ENCODE measurements at regions of chr6 and their contacts with region 1.

Region 1: GRCh38 chr6:138517635-138518034 is 18.3 kb upstream of the NHSL1 start:
- DNase-seq: peak; percentile 67
- H3K4me3 Mint-ChIP-seq: no peak overlapping the region
- H3K27ac Mint-ChIP-seq: no peak overlapping the region
- H3K4me1 Mint-ChIP-seq: peaks cover 31% of the 10 kb centered on the region
- H3K27me3 Mint-ChIP-seq: peaks cover 4% of the 10 kb centered on the region

Region 2: GRCh38 chr6:138455746-138456400 is 61.8 kb before region 1 on chr6:
- CTCF ChIA-PET with region 1: interaction called, 10 read pairs
- POLR2A ChIA-PET with region 1: no interaction called
- DNase-seq: peak; percentile 46
- H3K4me3 Mint-ChIP-seq: peak overlapping the region; percentile 58
- H3K27ac Mint-ChIP-seq: peak overlapping the region; percentile 89
- H3K4me1 Mint-ChIP-seq: peaks cover 33% of the 10 kb centered on the region
- H3K27me3 Mint-ChIP-seq: no peaks in the 10 kb centered on the region

Region 3: GRCh38 chr6:138795809-138796603 is 278.4 kb after region 1 on chr6 and contains the start of gene ECT2L:
- CTCF ChIA-PET with region 1: no interaction called
- POLR2A ChIA-PET with region 1: no interaction called
- DNase-seq: no peak
- H3K4me3 Mint-ChIP-seq: no peak within 1 kb of the TSS
- H3K27ac Mint-ChIP-seq: no peak within 1 kb of the TSS
- H3K4me1 Mint-ChIP-seq: no peaks in the 10 kb centered on the region
- H3K27me3 Mint-ChIP-seq: peaks cover 9% of the 10 kb centered on the region
- total RNA-seq, gene ECT2L: not detected

Region 4: DNA sequence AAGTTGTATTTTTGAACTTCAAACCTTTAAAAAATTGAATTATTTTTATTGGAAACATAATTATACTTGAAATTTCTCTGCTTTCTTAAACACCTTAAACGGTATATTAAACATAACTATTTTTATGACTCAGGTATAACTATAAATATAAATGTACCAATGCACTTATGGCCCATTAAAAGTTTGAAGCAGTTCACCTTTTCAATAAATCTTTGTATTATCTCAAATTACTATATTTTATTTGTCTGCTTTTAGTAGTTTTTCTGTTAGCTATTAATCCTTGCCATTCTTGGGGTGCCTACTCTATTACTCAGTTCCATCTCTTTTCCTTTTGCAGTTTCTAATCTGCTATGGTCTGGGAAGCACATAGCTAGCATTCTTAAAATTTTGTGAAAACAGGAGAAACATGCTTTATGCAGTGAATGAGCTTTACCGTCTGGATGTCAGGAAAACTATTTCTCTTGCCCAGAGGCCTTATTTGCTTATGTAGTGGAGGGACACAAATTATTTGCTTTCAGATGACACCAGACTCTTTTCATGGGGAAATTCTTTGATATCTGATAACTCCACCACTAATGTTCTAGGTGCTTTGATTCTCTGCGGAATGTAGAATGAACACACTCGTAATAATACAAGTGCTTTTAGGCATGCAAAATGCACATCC is 1235.7 kb after region 1 on chr6:
- CTCF ChIA-PET with region 1: no interaction called
- POLR2A ChIA-PET with region 1: no interaction called
- DNase-seq: no peak
- H3K4me3 Mint-ChIP-seq: no peak overlapping the region
- H3K27ac Mint-ChIP-seq: no peak overlapping the region
- H3K4me1 Mint-ChIP-seq: no peaks in the 10 kb centered on the region
- H3K27me3 Mint-ChIP-seq: peaks cover 5% of the 10 kb centered on the region

Measured in activated CD4-positive, alpha-beta memory T cell treated with anti-CD3 and anti-CD28 coated beads, Interleukin-2, amount 10 ng/mL, durations not matched to agents 7 days and 5 days (primary cell).